Mucosa of descending colon (tissue), 3 donors: ENCODE measurements at regions of chr12 and their contacts with region 1.

Region 1: DNA sequence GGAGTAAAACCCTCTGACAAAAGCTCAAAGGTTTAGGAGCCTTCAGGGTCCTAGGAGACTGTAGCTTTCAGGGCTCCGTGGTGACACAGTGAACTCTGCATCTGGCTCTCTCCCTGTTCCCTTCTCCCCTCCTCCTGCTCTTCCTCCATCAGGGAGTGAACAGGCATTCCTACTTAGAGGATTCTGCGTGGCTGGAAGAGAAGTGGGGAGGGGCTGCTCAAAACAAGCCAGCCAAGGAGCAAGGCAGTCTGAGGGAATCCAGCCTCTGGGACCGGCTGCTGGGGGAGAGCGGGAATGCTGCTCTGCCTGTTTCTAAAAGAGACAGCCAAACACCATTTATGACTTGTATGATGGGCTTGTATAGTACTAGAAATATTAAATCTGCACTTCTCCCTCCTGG is 49.5 kb downstream of the RBMS2 start:
- DNase-seq: no peak
- ATAC-seq: no peak
- H3K4me3 ChIP-seq: no peak overlapping the region
- H3K4me1 ChIP-seq: peaks cover 6% of the 10 kb centered on the region
- CTCF ChIP-seq: no peak

Region 2: GRCh38 chr12:56510786-56511185 is 60.3 kb before region 1 on chr12:
- intact Hi-C with region 1: loop called (anchors 1 to 5 kb)
- DNase-seq: no peak
- ATAC-seq: no peak
- H3K4me3 ChIP-seq: no peak overlapping the region
- H3K4me1 ChIP-seq: no peaks in the 10 kb centered on the region
- CTCF ChIP-seq: no peak